GM13977 (cell line): ENCODE measurements at regions of chr1 and their contacts with region 1.

Region 1: GRCh38 chr1:56578963-56579875 is at the start of gene PLPP3:
- DNase-seq: peak; percentile 56
- CTCF ChIP-seq: peak; percentile 23

Region 2: DNA sequence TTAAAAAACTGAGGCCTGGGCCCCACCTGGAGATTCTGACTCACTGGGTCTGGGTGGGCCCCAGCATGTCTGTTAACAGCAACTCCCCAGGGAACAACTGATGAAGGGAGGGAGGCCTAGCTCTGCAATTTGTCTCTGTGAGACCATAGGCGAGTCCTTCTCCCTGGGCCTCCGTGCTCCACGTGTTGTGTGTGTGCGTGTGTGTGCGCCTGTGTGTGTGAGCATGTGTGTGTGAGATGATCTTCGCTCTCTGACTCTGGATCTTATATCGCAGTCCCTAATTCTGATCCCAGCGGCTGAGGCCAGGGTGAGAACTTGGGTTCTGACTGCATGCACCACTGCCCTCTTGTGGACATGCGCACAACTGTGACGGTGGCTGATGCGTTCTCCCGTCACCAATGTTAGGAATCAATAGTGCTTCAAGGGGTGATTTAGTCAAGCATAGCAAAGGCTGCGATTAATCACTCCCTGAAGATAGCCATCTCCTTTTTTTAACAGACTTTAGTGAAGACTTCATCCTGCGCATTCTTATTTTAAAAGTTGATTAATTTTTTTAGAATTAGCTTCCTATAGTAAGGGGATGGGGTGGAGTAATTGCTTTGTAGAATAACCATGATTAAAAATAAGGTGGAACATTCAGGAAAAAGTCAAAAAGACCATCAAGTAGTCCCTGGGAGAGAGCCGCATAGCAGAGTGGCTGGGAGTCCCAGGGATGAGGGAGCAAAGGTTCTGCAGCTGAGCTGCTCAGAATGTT is 1301.7 kb before region 1 on chr1:
- in situ Hi-C with region 1: loop called (anchors 25 kb)
- DNase-seq: peak; percentile 71
- CTCF ChIP-seq: peak; percentile 74

Region 3: DNA sequence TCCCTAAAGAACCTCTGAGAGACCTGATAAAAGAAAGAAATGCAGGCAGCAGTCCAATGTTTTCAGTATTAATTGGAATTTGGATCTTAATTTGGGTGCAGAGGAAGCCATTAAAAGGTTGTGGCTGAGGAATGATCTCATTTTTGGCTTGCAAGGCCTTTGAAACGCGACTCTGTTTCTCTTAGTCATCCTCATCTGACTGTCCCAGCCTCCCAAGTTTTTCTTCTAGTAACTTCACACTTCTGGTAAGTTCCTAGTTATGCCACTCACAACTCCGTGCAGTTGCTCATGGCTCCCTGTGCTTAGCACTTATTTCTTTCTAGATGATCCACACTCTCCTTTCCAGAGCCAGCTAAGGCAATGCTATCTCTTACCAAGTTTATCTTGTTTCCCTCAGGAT is 1216.7 kb before region 1 on chr1:
- in situ Hi-C with region 1: loop called (anchors 25 kb)
- DNase-seq: no peak
- CTCF ChIP-seq: no peak

Region 4: DNA sequence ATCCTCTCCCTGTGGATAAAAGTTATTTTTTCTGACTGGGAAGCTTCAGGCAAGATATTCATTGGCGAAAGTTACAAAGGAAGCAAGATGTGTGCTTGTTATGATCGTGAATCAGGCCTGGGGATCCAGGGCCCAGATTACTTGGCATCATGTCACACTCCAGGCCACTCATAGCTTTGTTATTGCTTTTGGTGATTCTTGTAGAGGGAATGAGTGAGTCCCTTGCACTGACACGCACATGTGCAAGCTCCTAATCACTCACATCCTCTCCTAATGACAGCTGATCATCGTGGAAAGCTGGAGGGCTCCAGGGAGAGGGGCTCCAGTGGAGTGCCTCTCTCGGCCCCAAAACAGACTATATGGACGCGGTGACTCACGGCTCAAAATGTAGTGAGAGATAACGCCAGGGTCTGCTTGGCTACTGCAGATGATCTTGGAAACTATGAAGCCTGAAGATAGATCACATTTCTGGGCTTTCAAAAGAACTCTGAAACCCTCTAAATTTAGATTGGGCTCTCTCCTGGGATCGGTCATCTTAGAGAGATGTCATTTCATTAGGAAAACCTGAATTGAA is 883.0 kb before region 1 on chr1:
- in situ Hi-C with region 1: loop called (anchors 25 kb)
- DNase-seq: no peak
- CTCF ChIP-seq: no peak